Right lobe of liver (tissue), 6 donors: ENCODE measurements at regions of chr6 and their contacts with region 1.

Region 1: GRCh38 chr6:136201732-136202131 is 48.4 kb downstream of the MTFR2 start:
- DNase-seq: no peak
- ATAC-seq: peak; percentile 28 to 76 (median 62)
- H3K4me3 ChIP-seq: no peak overlapping the region
- H3K27ac ChIP-seq: no peak overlapping the region
- H3K4me1 ChIP-seq: no peaks in the 10 kb centered on the region
- H3K27me3 ChIP-seq: no peaks in the 10 kb centered on the region
- CTCF ChIP-seq: no peak
- POLR2A ChIP-seq: no peak

Region 2: DNA sequence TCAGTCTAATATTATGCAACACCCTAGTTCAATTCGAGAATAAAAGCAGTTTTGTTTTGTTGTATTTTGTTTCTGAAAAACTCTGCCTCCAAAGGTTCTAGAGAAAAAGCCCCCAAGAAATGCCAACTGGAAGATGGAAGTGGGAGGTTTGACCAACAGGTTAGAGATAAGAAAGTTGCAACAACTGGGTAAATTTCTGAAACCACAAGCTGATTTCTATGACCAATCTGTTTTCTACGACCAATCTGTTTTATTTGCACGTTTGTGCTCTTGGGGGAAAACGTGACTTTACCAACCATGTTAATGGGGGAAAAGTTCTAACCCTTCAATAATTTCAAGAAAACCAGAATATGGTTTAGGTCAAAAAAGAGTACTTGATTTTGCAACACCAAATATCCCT is 177.0 kb before region 1 on chr6:
- intact Hi-C with region 1: loop called in 1 of 2 experiments (anchors 10 kb)
- DNase-seq: no peak
- ATAC-seq: no peak
- H3K4me3 ChIP-seq: no peak overlapping the region
- H3K27ac ChIP-seq: no peak overlapping the region
- H3K4me1 ChIP-seq: no peaks in the 10 kb centered on the region
- H3K27me3 ChIP-seq: no peaks in the 10 kb centered on the region
- CTCF ChIP-seq: no peak
- POLR2A ChIP-seq: no peak

Region 3: GRCh38 chr6:136137008-136137692 is 64.6 kb before region 1 on chr6:
- intact Hi-C with region 1: no loop called
- DNase-seq: no peak
- ATAC-seq: peak in 1 of 4 donors; percentile 78
- H3K4me3 ChIP-seq: no peak overlapping the region
- H3K27ac ChIP-seq: no peak overlapping the region
- H3K4me1 ChIP-seq: no peaks in the 10 kb centered on the region
- H3K27me3 ChIP-seq: no peaks in the 10 kb centered on the region
- CTCF ChIP-seq: no peak
- POLR2A ChIP-seq: no peak

Region 4: DNA sequence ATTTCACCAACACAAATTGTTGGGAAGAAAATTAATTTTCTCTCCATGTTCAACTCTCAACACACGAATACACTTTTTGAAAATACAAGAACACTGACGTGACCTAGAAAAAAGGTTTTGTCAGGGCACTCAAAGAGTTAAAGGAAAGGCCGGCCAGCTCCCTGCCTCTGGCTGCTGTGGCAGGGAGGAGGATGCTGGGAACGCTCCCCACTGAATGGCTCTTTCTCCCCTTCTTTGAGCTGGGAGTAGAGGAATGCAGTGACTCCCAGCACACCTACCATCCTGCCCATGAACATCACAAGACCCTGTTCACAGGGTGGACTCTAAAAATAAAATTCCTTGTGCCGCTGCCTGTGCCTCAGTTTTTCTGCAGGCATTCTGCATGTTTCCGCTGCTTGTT is 543.6 kb after region 1 on chr6:
- intact Hi-C with region 1: no loop called
- DNase-seq: no peak
- ATAC-seq: no peak
- H3K4me3 ChIP-seq: no peak overlapping the region
- H3K27ac ChIP-seq: no peak overlapping the region
- H3K4me1 ChIP-seq: no peaks in the 10 kb centered on the region
- H3K27me3 ChIP-seq: no peaks in the 10 kb centered on the region
- CTCF ChIP-seq: no peak
- POLR2A ChIP-seq: no peak